ENCODE measurements at regions of chr18 and their contacts with region 1.

Region 1: DNA sequence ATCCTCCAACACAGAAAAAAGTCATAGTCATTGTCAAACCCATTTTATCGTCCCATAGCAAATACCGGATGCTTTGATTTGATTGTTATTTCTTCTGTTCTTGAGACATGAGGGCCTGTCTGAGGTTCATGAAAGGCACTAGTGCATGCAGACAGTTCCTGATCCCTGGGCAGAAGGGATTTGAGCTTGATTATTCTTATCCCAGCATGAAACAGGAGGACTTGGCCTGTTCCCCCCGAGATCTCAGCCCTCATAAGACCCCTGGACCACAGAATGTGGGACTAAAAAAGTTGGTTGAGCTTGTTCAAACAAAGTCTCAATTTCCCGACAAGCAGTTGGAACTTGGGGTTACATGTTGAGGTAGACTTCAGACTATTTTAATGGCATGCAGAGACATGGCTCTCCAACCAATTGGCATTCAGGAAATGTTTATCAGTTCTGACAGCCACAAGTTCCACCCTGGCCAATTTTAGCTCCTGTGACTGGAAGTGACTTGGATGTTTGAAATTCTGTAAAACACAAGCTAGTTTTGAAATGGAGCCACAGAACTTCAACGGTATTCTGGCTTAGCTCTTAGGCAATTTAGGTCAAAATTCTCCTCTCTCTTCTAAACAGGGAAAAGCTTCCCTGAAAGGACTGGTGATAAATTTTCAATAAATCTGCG is 366.9 kb upstream of the SLC14A2 start:
- DNase-seq: peak; percentile 81
- ATAC-seq: peak; percentile 82
- H3K4me3 ChIP-seq: no peak overlapping the region
- H3K27ac ChIP-seq: peak overlapping the region; percentile 100
- H3K4me1 ChIP-seq: peaks cover 26% of the 10 kb centered on the region
- H3K27me3 ChIP-seq: no peaks in the 10 kb centered on the region
- CTCF ChIP-seq: no peak
- POLR2A ChIP-seq: no peak
- RAD21 ChIP-seq: no peak

Region 2: GRCh38 chr18:45169610-45170009 is 78.8 kb before region 1 on chr18:
- CTCF ChIA-PET with region 1: no interaction called
- POLR2A ChIA-PET with region 1: no interaction called
- dilution Hi-C with region 1: no loop called
- in situ Hi-C with region 1: no loop called
- intact Hi-C with region 1: loop called (anchors 5 kb)
- DNase-seq: peak; percentile 90
- ATAC-seq: peak; percentile 56
- H3K4me3 ChIP-seq: no peak overlapping the region
- H3K27ac ChIP-seq: no peak overlapping the region
- H3K4me1 ChIP-seq: peaks cover 25% of the 10 kb centered on the region
- H3K27me3 ChIP-seq: no peaks in the 10 kb centered on the region
- CTCF ChIP-seq: no peak
- POLR2A ChIP-seq: no peak
- RAD21 ChIP-seq: no peak

Region 3: DNA sequence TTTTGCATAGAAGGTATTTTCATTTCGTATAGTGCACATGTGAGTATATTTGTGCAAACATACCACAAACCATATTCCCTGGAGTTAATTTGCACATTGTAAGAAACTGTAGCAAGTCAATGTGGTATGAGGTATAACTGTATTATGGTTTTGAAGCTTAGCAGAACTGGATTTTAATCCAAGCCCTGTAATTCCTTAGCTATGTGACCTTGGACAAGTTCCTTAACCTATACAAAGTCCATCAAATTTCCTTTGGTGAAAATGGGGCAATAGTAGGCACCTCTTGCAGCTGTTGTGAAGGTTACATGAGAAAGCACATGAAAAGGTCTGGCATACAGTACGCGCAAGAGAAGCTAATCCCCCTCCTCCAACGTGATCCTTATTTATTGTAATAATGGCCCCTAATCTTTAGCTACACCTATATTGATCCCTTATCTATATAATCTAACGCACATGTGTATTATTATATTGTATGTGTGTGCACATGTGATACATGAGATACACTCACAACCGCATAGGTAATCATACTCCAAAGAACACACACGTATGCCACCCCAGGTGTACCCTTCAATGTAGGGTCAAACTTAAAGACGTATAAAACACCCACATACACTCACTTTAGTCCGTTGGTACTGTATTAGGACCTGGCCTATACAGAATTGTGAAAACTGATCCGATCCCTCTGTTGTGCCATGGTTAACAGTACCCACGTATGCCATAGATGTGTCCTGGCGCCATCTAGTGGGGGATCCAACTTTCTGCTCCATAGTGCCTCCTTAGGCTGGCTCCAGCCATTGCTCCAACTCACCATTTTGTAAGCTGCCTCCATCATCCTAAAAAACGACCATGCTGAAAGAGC is 36.0 kb before region 1 on chr18:
- CTCF ChIA-PET with region 1: interaction called, 10 read pairs
- POLR2A ChIA-PET with region 1: no interaction called
- dilution Hi-C with region 1: no loop called
- in situ Hi-C with region 1: no loop called
- intact Hi-C with region 1: no loop called
- DNase-seq: peak; percentile 74
- ATAC-seq: peak; percentile 95
- H3K4me3 ChIP-seq: no peak overlapping the region
- H3K27ac ChIP-seq: no peak overlapping the region
- H3K4me1 ChIP-seq: no peaks in the 10 kb centered on the region
- H3K27me3 ChIP-seq: peaks cover 2% of the 10 kb centered on the region
- CTCF ChIP-seq: peak; percentile 100
- POLR2A ChIP-seq: 0 out of 2 replicates have a peak, but pooled peaks have one; percentile 37
- RAD21 ChIP-seq: peak; percentile 94

Region 4: GRCh38 chr18:45231617-45232016 is 16.8 kb before region 1 on chr18:
- CTCF ChIA-PET with region 1: no interaction called
- POLR2A ChIA-PET with region 1: no interaction called
- dilution Hi-C with region 1: no loop called
- in situ Hi-C with region 1: no loop called
- intact Hi-C with region 1: loop called (anchors 2 kb)
- DNase-seq: peak; percentile 52
- ATAC-seq: peak; percentile 91
- H3K4me3 ChIP-seq: no peak overlapping the region
- H3K27ac ChIP-seq: peak overlapping the region; percentile 66; the same call in 1 of the 2 replicates
- H3K4me1 ChIP-seq: peaks cover 12% of the 10 kb centered on the region
- H3K27me3 ChIP-seq: peaks cover 6% of the 10 kb centered on the region; the same call in 1 of the 2 replicates
- CTCF ChIP-seq: no peak
- POLR2A ChIP-seq: no peak
- RAD21 ChIP-seq: no peak